ENCODE measurements at regions of chr17 and their contacts with region 1.

Region 1: DNA sequence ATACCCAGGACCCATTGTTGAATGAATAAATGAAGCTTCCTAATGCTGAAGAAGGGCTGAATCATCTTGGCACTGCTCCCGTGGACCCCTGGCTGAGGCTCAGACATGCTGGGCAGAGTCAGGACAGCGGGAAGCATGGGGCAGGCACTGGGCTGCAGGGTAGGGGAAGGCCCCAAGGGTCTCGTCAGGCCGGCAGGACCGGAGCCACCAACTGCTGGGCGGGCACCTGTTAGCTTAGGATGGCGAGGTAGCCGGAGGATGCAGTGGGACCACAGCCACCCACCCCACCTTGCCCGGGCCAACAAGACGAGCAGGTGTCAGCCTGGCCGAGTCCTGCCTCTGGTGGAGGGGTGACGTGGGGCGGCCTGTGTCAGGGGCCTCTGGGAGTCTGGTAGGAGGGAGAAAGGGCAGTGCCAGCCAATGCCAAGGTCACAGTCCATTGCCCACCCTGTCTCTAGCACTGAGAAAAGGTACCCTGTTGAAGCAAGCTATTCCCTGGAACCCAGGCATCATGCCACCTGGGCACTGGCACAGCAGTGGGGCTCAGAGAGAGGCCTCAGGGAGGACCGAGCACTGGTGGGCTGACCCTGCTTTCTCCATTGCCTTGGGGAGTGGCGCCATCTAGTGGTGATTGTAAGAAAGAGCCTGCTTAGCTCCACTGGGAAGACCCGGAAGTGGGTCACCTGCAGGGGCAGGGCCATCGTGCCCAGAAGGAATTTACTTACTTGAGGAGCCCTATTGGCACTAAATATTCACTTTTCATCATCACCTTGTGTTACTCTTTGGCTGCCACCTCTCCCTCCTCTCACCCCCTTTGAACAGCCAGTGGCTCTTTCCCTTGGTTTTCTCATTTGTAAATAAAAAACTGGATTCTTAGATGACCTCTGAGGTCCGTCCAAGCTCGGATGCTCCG is 3.0 kb upstream of the DLX3 start:
- DNase-seq: peak; percentile 81 to 86 (median 84)
- ATAC-seq: peak; percentile 77
- H3K4me3 ChIP-seq: no peak overlapping the region
- H3K27ac ChIP-seq: no peak overlapping the region
- H3K4me1 ChIP-seq: peaks cover 43% of the 10 kb centered on the region
- H3K27me3 ChIP-seq: peaks cover 0 to 15% of the 10 kb centered on the region in 2 donors
- CTCF ChIP-seq: peak; percentile 91 to 97 (median 94)
- POLR2A ChIP-seq: no peak

Region 2: DNA sequence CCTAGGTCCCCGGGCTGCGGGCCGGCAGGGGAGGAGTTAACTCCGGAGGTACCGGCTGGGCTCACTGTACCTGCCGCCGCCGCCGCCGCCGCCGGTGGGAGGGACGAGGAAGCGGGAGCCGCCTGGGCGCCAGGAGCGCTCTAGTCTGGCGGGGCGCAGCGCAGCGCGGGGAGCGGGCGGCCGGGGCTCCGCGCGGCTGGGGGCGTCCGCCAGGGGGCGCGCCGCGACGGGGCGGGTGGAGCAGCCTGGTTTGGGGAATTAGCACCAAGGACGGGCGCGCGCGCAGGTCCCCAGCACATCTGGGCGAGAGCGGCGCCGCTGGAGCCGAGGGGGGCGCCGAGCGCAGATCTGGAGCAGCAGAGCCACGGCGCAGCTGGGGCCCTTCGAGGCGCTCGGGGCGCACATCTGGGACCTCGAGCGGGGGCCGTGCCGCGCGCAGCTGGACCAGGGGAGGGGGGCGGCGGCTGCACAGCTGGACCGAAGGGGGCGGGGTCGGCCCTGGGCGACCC is 422.4 kb before region 1 on chr17 and contains the start of gene NXPH3:
- intact Hi-C with region 1: loop called (anchors 10 kb)
- DNase-seq: peak; percentile 42 to 57 (median 48)
- ATAC-seq: peak; percentile 63
- H3K4me3 ChIP-seq: peak within 1 kb of the TSS in 1 of 2 donors; percentile 29
- H3K27ac ChIP-seq: no peak within 1 kb of the TSS
- H3K4me1 ChIP-seq: peaks cover 21% of the 10 kb centered on the region
- H3K27me3 ChIP-seq: peaks cover 0 to 32% of the 10 kb centered on the region in 2 donors
- CTCF ChIP-seq: peak in 5 of 7 experiments; percentile 15 to 63 (median 38)
- POLR2A ChIP-seq: no peak
- total RNA-seq, gene NXPH3: 0.78 to 0.99 TPM

Region 3: DNA sequence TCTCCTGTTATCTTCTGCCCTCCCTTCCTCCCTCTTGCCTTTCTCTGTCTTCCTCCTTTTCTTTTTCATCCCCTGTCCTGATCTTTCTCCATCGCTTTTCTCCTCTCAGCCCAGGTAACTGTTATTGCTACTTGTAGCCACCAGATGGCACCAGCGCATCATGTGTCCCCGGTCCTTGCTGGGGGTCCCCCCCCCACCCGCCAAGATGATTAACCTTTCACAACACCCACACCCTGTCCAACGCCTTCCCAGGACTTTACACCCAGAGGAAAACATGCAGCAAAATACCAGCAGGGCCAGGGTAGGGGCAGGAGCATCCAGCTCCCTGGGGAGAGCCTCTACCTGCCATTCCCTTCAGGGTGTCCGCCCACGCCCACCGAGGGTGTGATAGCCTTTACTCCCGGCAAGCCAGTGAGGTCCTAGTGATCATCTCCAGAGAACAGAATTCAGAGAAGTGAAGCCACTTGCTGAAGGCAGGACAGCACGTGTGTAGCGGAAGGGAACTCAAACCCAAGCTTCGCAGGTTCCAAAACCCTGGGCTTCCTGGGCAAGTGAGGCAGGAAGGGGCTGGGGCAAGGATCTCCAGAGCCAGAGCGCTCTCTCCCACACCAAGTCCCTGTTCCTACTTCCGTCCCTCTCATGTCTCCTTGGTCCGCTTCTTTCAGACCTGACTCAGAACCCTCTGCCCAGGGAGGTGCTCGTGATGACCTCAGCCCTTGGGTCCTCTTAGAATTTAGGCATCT is 136.7 kb before region 1 on chr17:
- intact Hi-C with region 1: loop called (anchors 5 kb)
- DNase-seq: peak; percentile 41 to 62 (median 52)
- ATAC-seq: peak; percentile 51
- H3K4me3 ChIP-seq: no peak overlapping the region
- H3K27ac ChIP-seq: no peak overlapping the region
- H3K4me1 ChIP-seq: no peaks in the 10 kb centered on the region
- H3K27me3 ChIP-seq: no peaks in the 10 kb centered on the region
- CTCF ChIP-seq: peak; percentile 65 to 97 (median 76)
- POLR2A ChIP-seq: no peak

Region 4: DNA sequence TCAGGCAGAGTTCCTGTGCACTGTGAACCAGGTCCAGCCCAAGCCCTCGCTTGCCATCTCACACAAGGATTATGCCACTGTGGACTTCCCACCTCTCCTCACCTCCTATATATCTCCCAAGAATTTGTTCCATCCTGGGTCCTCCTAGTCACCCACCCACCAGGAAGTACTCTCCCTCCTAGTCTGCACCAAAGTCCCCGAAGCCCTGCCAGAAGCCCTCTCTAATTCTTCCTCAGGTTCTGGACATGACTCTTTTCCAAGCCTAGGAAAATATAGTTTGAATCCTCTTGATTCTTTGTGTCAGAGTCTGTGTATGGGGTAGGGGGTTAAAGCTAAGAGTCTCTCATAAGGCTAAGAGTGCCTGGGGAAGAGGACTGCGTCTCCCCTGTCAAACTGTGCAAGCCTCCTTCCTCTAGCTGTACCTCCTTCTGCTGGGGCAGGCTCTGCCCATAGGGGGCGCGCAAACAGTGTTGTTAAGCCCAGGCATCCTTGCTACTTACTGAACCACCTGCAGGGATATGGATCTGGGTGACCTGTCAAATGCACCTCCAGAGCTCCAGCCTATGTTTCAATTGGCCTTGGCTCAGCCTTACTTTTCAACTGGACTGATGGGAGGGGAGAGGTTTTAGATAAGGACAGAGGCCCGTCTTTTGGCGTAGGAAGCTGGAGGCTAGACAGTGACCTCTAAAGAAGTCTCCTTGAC is 45.7 kb before region 1 on chr17:
- intact Hi-C with region 1: loop called (anchors 5 kb)
- DNase-seq: peak; percentile 84 to 92 (median 86)
- ATAC-seq: peak; percentile 95
- H3K4me3 ChIP-seq: no peak overlapping the region
- H3K27ac ChIP-seq: no peak overlapping the region
- H3K4me1 ChIP-seq: no peaks in the 10 kb centered on the region
- H3K27me3 ChIP-seq: no peaks in the 10 kb centered on the region
- CTCF ChIP-seq: peak; percentile 75 to 84 (median 82)
- POLR2A ChIP-seq: no peak

Region 5: DNA sequence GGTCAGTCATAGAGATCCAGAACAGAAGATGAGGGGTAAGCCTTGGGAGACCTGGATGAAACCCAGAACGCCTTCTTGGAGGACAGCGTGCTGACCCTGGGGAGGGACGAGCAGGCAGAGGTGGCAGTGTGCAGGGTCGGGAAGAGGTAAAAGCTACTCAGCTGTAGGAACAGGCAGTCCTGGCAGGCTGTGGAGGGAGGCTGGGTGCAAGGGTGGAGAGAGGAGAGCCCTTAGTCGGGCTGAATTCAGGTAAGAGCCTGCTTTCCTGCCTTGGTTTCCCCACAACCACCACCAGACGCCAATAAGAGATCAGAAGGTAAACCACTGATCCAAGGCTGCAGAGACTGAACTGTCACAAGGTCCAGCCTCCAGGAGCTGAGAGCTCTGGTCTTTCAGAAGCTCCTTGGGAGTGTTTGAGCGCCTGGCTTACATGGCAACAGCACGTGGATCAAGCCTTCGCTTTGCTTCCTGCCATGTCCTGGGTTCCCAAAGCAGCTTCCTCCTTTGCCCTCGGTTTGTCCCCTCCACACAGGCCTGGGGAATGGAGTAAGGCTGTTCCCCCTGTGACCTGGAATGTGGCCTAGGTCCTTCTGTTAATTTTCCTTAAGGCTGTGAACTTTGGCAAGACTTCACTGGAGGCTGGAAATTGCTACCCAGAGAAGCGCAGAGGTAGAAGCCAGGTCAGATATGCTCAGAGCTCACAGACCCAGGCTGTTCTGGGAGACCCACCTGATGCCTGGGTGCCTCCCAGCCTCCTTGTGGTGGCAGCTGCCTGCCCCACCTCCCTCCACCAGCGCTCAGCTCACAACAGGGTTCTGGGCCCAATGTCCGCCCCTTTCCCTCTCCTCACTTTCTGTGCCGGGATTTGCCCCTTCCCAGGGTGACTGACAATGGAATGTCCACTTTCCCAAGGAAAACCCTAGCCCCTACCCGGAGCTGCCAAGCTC is 93.2 kb after region 1 on chr17:
- intact Hi-C with region 1: no loop called
- DNase-seq: no peak
- ATAC-seq: no peak
- H3K4me3 ChIP-seq: no peak overlapping the region
- H3K27ac ChIP-seq: no peak overlapping the region
- H3K4me1 ChIP-seq: peaks cover 15% of the 10 kb centered on the region
- H3K27me3 ChIP-seq: no peaks in the 10 kb centered on the region
- CTCF ChIP-seq: no peak
- POLR2A ChIP-seq: no peak

Region 6: DNA sequence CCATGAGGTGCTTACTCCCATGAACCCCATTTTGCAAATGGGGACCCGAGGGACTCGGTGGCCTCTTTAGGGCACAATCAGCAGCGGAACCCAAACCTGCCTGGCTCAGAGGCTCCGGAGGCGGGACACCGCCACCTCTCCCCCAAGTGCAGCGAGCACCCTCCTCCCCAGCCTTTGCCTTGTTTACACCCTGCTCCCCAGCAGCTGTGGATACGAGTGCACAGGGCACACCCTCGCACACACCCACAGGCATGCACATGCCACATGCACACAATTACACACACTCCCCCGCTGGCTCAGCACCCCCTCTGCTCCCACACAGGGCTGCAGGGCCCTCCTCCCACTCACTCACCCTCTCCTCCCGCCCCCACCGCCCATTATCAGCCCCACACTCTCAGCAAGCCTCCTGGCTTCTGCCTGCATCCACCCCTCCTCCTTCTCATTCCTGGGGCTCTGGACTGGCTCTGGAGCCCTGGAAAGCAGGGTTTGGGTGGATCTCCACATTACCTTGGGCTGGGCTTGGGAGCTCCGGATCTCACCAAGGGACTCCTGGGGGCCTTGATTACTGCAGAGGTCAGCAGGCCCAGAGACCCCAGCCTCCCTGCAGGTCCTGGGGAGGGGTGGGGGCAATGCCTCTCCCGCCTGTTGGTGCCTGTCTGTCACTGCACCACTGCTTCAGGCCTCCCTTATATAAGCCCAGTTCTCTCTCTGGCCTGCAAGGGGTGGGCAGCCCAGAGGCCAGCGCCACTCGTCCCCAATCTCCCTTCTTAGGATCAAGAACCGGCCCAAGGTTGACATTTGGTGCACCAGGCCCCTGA is 103.5 kb after region 1 on chr17:
- intact Hi-C with region 1: no loop called
- DNase-seq: peak; percentile 27 to 88 (median 66)
- ATAC-seq: peak; percentile 15
- H3K4me3 ChIP-seq: no peak overlapping the region
- H3K27ac ChIP-seq: peak overlapping the region; percentile 60 to 92 (median 84)
- H3K4me1 ChIP-seq: peaks cover 69% of the 10 kb centered on the region
- H3K27me3 ChIP-seq: no peaks in the 10 kb centered on the region
- CTCF ChIP-seq: no peak
- POLR2A ChIP-seq: peak in 1 of 3 donors; percentile 16